Activated CD4-positive, alpha-beta memory T cell treated with anti-CD3 and anti-CD28 coated beads for 36 hours (primary cell): ENCODE measurements at regions of chr6 and their contacts with region 1.

Region 1: DNA sequence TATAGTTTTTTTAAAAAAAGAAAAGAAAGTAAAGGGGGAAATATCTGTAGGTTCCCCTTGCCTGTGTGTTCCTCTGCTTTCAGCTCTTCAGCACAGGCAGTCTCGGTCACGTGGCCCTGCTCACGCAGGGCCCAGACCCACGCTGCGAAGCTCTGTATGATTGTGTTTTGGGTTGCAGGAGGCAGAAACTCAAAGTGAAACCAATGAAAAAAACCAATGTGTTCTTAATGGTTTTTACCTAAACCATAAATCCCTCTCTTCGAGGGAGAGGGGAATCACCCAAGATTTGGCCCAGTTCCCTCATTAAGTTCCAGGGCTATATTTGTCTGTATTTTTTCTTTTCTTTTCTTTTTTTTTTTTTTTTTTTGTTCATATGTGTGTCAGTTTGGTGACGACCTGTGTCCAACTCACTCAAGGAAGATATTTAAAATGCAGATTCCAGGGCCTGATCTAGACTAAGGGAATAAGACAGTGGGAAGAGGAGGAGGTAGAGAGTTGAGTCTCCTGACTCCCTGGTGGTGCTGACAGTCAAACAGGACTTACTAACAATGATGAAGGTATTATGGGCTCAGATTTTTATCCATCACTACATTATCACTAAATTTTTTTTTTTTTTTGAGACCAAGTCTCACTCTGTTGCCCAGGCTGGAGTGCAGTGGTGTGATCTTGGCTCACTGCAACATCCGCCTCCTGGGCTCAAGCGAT is 33.8 kb upstream of the RREB1 start:
- DNase-seq: peak; percentile 87
- H3K4me3 Mint-ChIP-seq: peak overlapping the region; percentile 8
- H3K27ac Mint-ChIP-seq: no peak overlapping the region
- H3K4me1 Mint-ChIP-seq: peaks cover 14% of the 10 kb centered on the region
- H3K27me3 Mint-ChIP-seq: peaks cover 19% of the 10 kb centered on the region

Region 2: GRCh38 chr6:5941188-5941587 is 1132.8 kb before region 1 on chr6:
- CTCF ChIA-PET with region 1: no interaction called
- POLR2A ChIA-PET with region 1: no interaction called
- intact Hi-C with region 1: no loop called
- DNase-seq: no peak
- H3K4me3 Mint-ChIP-seq: no peak overlapping the region
- H3K27ac Mint-ChIP-seq: no peak overlapping the region
- H3K4me1 Mint-ChIP-seq: no peaks in the 10 kb centered on the region
- H3K27me3 Mint-ChIP-seq: peaks cover 3% of the 10 kb centered on the region

Region 3: GRCh38 chr6:6798448-6798860 is 275.5 kb before region 1 on chr6:
- CTCF ChIA-PET with region 1: no interaction called
- POLR2A ChIA-PET with region 1: no interaction called
- intact Hi-C with region 1: loop called (anchors 5 kb)
- DNase-seq: peak; percentile 68
- H3K4me3 Mint-ChIP-seq: no peak overlapping the region
- H3K27ac Mint-ChIP-seq: peak overlapping the region; percentile 78
- H3K4me1 Mint-ChIP-seq: peaks cover 40% of the 10 kb centered on the region
- H3K27me3 Mint-ChIP-seq: peaks cover 6% of the 10 kb centered on the region

Region 4: GRCh38 chr6:7016226-7016625 is 57.7 kb before region 1 on chr6:
- CTCF ChIA-PET with region 1: no interaction called
- POLR2A ChIA-PET with region 1: no interaction called
- intact Hi-C with region 1: no loop called
- DNase-seq: no peak
- H3K4me3 Mint-ChIP-seq: no peak overlapping the region
- H3K27ac Mint-ChIP-seq: no peak overlapping the region
- H3K4me1 Mint-ChIP-seq: no peaks in the 10 kb centered on the region
- H3K27me3 Mint-ChIP-seq: peaks cover under 1% of the 10 kb centered on the region

Region 5: DNA sequence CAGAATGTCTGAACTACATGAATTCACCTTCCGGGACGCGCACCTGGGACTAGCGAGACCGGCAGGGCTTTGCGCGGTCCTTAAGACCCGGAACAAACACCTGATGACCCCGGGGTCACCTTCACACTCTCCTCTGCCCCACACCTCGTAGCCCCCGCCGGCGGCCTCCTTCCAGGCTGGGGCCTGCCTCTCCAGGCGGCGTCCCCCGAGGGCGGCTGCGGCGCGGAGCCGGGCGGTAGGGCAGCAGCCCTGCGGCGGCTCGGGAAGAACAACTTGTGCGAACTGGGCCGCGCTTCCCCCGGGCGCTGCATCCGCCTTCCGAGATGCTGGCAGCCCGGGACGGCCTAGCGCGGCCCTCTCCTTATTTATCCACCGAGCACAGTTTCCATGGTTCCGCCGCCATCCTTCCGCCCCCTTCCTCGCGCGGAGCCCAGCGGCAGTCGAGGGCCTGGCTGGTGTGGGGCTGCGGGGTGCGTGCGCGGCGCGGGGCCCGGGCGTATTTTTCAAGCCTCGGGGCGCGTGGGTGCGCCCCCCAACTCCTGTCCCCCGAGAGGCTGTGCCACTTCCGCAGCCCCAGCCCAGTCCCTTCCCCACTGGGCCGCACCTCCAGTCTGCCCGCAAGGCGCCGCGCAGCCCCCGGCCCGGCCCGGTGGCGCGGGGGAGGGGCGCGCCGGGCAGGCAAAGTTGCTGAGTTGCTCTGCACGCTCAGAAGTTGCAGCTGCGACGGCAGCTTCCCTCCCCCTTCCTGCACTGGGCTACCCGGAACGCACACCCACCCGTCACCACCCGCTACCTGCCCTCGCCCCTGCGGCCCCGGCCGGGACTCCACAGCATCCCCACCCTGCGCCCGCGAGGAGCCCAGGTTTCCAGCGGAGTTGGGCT is 22.5 kb before region 1 on chr6:
- CTCF ChIA-PET with region 1: no interaction called
- POLR2A ChIA-PET with region 1: no interaction called
- intact Hi-C with region 1: loop called (anchors 2 kb)
- DNase-seq: peak; percentile 59
- H3K4me3 Mint-ChIP-seq: peak overlapping the region; percentile 46
- H3K27ac Mint-ChIP-seq: no peak overlapping the region
- H3K4me1 Mint-ChIP-seq: peaks cover 13% of the 10 kb centered on the region
- H3K27me3 Mint-ChIP-seq: peaks cover 9% of the 10 kb centered on the region

Region 6: GRCh38 chr6:7086488-7086887 is 12.5 kb after region 1 on chr6:
- CTCF ChIA-PET with region 1: interaction called, 6 read pairs
- POLR2A ChIA-PET with region 1: interaction called, 17 read pairs
- intact Hi-C with region 1: loop called (anchors 1 kb)
- DNase-seq: peak; percentile 57
- H3K4me3 Mint-ChIP-seq: peak overlapping the region; percentile 21
- H3K27ac Mint-ChIP-seq: no peak overlapping the region
- H3K4me1 Mint-ChIP-seq: peaks cover 28% of the 10 kb centered on the region
- H3K27me3 Mint-ChIP-seq: peaks cover 5% of the 10 kb centered on the region

Region 7: GRCh38 chr6:8888468-8888867 is 1814.5 kb after region 1 on chr6:
- CTCF ChIA-PET with region 1: no interaction called
- POLR2A ChIA-PET with region 1: no interaction called
- intact Hi-C with region 1: no loop called
- DNase-seq: no peak
- H3K4me3 Mint-ChIP-seq: no peak overlapping the region
- H3K27ac Mint-ChIP-seq: no peak overlapping the region
- H3K4me1 Mint-ChIP-seq: no peaks in the 10 kb centered on the region
- H3K27me3 Mint-ChIP-seq: no peaks in the 10 kb centered on the region